ENCODE measurements at regions of chr10 and their contacts with region 1.

Region 1: DNA sequence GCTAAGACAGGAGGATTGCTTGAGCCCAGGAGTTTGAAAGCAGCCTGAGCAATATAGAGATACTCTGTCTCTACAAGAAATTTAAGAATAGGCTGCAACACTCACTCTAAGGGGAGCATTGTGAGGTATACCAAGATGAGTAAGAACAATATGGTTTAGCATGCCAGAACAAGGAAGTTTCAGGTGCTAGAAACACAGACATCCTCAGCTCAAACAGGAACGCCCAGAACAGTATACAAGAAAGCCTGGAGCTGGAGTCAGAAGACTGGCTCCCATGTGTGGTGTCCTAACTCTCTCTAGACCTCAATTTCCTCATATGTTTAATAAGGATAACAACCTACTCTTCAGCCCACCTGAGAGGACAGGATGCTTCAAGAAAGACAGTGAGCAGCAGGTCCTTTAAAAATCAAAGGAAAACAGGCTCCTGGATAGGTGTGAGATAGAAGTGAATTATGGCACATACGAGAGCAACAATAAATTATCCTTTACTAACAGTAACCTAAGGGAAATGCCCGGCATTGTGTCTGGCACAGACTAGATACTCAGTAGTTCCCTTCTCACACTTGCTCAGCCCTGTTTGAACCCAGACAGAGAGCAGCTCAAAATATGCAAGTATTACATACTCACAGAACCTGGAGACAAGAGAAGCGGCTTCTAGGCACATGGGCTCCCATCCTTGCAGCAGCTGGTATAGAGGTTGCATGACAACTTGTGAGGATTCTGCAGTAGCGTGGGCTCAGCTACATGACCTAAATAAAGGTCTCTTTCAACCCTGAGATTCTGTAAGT is 45.4 kb downstream of the KAT6B start:
- DNase-seq: no peak
- ATAC-seq: no peak
- H3K4me3 ChIP-seq: no peak overlapping the region
- H3K27ac ChIP-seq: no peak overlapping the region
- H3K4me1 ChIP-seq: peaks cover 0 to 45% (median 23%) of the 10 kb centered on the region in 9 donors
- H3K27me3 ChIP-seq: no peaks in the 10 kb centered on the region
- CTCF ChIP-seq: no peak

Region 2: DNA sequence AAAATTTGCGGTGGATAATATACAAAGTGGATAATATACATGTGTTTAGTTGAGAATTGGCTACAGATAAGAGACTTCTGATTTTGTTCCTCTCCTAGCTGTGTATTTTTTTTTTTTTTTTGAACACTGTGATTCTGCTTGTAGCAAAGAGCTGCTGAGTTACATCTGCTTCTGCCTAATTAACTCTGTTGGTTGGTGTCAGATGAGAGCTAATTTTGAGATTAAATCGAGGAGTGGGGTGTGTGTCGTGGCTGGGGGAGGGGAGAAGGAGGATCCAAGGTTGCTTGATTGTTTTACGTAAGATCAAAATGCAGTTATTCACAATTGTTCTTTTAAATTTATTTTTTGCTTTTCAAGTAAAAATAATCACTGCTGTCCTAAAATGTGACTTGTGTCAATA is 34.0 kb before region 1 on chr10:
- intact Hi-C with region 1: loop called in 1 of 10 experiments (anchors 5 kb)
- DNase-seq: no peak
- ATAC-seq: no peak
- H3K4me3 ChIP-seq: no peak overlapping the region
- H3K27ac ChIP-seq: peak overlapping the region in 2 of 10 donors; percentile 15 to 37
- H3K4me1 ChIP-seq: peaks cover 3 to 84% (median 63%) of the 10 kb centered on the region in 9 donors
- H3K27me3 ChIP-seq: no peaks in the 10 kb centered on the region
- CTCF ChIP-seq: no peak